GM12878 (cell line): ENCODE measurements at regions of chr13 and their contacts with region 1.

Region 1: GRCh38 chr13:100514788-100515409 is 73.7 kb downstream of the GGACT start:
- DNase-seq: peak; percentile 27
- ATAC-seq: peak; percentile 99
- H3K4me3 ChIP-seq: no peak overlapping the region
- H3K27ac ChIP-seq: no peak overlapping the region
- H3K4me1 ChIP-seq: peaks cover 4% of the 10 kb centered on the region; the same call in 1 of the 2 replicates
- H3K27me3 ChIP-seq: no peaks in the 10 kb centered on the region
- CTCF ChIP-seq: peak; percentile 90 to 97 (median 95)
- EP300 ChIP-seq: no peak
- POLR2A ChIP-seq: no peak
- RAD21 ChIP-seq: peak; percentile 95

Region 2: DNA sequence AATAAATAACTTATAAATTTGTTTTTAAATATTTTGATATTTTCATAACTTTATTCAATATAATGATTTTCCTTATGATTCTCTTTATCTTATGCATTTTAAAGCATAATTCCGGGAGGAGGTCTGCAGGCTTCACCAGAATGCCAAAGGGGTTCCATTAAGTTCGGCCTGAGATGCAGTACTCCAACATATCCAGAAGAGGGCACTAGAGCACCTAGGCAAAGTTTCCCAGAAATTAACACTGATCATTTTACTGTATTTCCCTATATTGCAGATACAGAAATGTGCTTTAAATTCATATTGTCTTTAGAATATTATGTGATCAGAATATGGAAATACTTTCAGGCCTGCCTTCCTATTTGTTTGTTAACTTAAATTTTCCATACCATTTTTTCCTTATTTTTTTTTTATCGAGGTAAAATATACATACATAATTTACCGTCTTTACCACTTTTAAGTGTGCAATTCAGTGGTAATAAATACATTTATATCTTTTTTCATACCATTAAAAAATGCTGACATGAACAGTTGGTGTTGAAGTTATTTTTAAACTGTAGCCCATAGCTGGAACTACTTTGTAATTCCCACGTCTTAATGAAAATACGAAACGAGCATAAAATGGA is 1072.5 kb before region 1 on chr13:
- CTCF ChIA-PET with region 1: no interaction called
- POLR2A ChIA-PET with region 1: no interaction called
- RAD21 ChIA-PET with region 1: no interaction called
- SMC1A ChIA-PET with region 1: interaction called, 3 read pairs
- in situ Hi-C with region 1: no loop called
- intact Hi-C with region 1: loop called (anchors 5 kb)
- DNase-seq: no peak
- ATAC-seq: peak; percentile 77
- H3K4me3 ChIP-seq: no peak overlapping the region
- H3K27ac ChIP-seq: no peak overlapping the region
- H3K4me1 ChIP-seq: 0 out of 2 replicates have a peak, but pooled peaks cover 2% of the 10 kb centered on the region
- H3K27me3 ChIP-seq: peaks cover 2 to 4% of the 10 kb centered on the region in 2 experiments; a peak in 2 of 4 replicates
- CTCF ChIP-seq: peak; percentile 81 to 93 (median 88)
- EP300 ChIP-seq: no peak
- POLR2A ChIP-seq: no peak
- RAD21 ChIP-seq: peak; percentile 96

Region 3: GRCh38 chr13:99898421-99898820 is 616.5 kb before region 1 on chr13:
- CTCF ChIA-PET with region 1: interaction called, 33 read pairs
- POLR2A ChIA-PET with region 1: no interaction called
- RAD21 ChIA-PET with region 1: interaction called, 3 read pairs
- SMC1A ChIA-PET with region 1: interaction called, 8 read pairs
- in situ Hi-C with region 1: no loop called
- intact Hi-C with region 1: loop called (anchors 5 kb)
- DNase-seq: no peak
- ATAC-seq: no peak
- H3K4me3 ChIP-seq: no peak overlapping the region
- H3K27ac ChIP-seq: no peak overlapping the region
- H3K4me1 ChIP-seq: no peaks in the 10 kb centered on the region
- H3K27me3 ChIP-seq: peaks cover 0 to 12% of the 10 kb centered on the region in 2 experiments; a peak in 2 of 4 replicates
- CTCF ChIP-seq: no peak
- EP300 ChIP-seq: no peak
- POLR2A ChIP-seq: no peak
- RAD21 ChIP-seq: no peak

Region 4: DNA sequence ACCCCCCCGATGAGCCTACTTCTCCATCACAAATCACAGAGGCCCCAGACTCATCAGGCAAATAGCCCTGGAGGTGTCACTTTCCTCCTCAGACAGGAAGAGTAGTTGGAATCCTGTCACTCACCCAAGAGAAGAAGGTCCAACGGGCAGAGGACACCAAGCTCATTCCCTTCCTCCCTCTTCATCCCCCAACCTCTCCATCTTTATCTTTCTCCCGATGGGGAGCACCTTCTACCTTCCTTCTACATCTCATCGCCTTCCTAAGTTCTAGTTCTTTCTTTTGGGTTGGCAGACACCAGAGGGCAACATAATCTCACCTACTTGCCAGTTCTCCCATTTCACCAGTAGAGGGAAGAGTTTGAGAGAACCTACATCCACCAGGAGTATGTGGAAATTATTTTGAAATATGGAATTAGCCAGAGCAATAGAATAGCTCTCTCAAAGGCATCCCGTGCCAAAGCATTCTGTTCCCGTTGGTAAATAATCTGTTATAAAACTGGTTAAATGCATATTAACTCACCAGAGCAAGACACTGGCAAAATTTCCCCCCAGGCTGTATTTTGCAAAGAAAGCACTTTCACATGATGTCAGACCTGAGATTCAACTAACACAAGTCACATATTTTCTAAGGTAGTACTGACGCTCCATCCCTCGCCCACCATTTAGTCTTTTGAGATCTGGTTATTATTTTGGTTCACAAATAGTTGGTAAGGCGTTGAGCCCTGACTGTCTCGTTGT is 598.4 kb before region 1 on chr13:
- CTCF ChIA-PET with region 1: interaction called, 60 read pairs
- POLR2A ChIA-PET with region 1: no interaction called
- RAD21 ChIA-PET with region 1: interaction called, 9 read pairs
- SMC1A ChIA-PET with region 1: interaction called, 7 read pairs
- in situ Hi-C with region 1: loop called (anchors 5 kb)
- intact Hi-C with region 1: loop called (anchors 1 kb)
- DNase-seq: peak; percentile 31
- ATAC-seq: peak; percentile 95
- H3K4me3 ChIP-seq: no peak overlapping the region
- H3K27ac ChIP-seq: no peak overlapping the region
- H3K4me1 ChIP-seq: no peaks in the 10 kb centered on the region
- H3K27me3 ChIP-seq: no peaks in the 10 kb centered on the region
- CTCF ChIP-seq: peak; percentile 91 to 99 (median 93)
- EP300 ChIP-seq: no peak
- POLR2A ChIP-seq: no peak
- RAD21 ChIP-seq: peak; percentile 86

Region 5: DNA sequence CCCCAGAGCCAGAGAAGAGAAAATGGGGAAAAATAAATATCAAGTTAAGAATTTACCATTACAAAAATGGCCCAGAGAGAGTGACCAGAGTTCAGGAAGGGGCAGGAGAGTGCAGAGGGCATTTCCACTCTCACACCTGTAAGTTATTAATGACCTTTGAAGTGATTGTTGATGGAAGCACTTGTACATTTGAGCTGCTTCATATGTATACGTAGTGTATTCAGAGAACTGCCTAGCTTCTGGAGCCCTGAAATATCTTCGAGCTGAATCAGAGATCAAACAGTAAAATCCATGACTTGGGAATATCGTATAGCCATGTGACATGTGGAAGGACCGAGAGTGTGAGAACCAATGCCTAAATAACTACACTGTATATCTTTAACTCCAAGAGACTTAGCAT is 475.2 kb before region 1 on chr13:
- CTCF ChIA-PET with region 1: interaction called, 3 read pairs
- POLR2A ChIA-PET with region 1: no interaction called
- RAD21 ChIA-PET with region 1: interaction called, 4 read pairs
- SMC1A ChIA-PET with region 1: no interaction called
- in situ Hi-C with region 1: no loop called
- intact Hi-C with region 1: loop called (anchors 10 kb)
- DNase-seq: no peak
- ATAC-seq: no peak
- H3K4me3 ChIP-seq: no peak overlapping the region
- H3K27ac ChIP-seq: no peak overlapping the region
- H3K4me1 ChIP-seq: no peaks in the 10 kb centered on the region
- H3K27me3 ChIP-seq: no peaks in the 10 kb centered on the region
- CTCF ChIP-seq: no peak
- EP300 ChIP-seq: no peak
- POLR2A ChIP-seq: no peak
- RAD21 ChIP-seq: no peak

Region 6: DNA sequence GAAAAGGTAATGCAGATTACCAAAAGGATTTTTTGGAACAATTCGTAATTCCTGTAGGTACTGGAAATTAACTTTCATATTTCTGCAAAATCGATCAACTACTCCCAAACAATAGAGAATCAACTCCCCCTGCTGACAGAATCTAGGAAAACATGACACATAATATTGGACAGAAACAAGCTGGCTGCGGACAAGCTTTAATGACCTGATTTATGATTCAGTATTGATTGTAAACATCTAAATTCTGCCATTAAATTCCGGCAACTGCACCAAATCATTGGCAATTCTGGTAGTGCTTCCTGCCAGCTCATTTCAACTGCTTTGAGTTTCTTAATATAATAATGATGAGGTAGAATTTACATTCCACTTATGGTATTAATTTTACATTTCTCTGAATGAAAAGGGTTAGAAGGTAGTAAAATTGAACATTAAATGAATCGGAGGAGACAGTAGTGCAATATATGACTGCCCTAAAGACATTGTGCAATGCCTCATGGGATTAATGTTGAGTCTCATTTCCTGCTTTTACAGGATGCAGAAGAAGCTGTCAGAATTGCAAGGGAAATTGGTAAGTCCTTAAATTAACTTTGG is 279.5 kb before region 1 on chr13:
- CTCF ChIA-PET with region 1: interaction called, 10 read pairs
- POLR2A ChIA-PET with region 1: no interaction called
- RAD21 ChIA-PET with region 1: interaction called, 13 read pairs
- SMC1A ChIA-PET with region 1: interaction called, 7 read pairs
- in situ Hi-C with region 1: loop called (anchors 10 kb)
- intact Hi-C with region 1: loop called (anchors 2 kb)
- DNase-seq: no peak
- ATAC-seq: peak; percentile 71
- H3K4me3 ChIP-seq: no peak overlapping the region
- H3K27ac ChIP-seq: no peak overlapping the region
- H3K4me1 ChIP-seq: no peaks in the 10 kb centered on the region; the same call in none of the 2 replicates
- H3K27me3 ChIP-seq: no peaks in the 10 kb centered on the region
- CTCF ChIP-seq: peak; percentile 30 to 53 (median 34); a peak in 4 of 6 replicates
- EP300 ChIP-seq: no peak
- POLR2A ChIP-seq: no peak
- RAD21 ChIP-seq: peak; percentile 83

Region 7: GRCh38 chr13:100365680-100366079 is 149.2 kb before region 1 on chr13:
- CTCF ChIA-PET with region 1: no interaction called
- POLR2A ChIA-PET with region 1: no interaction called
- RAD21 ChIA-PET with region 1: no interaction called
- SMC1A ChIA-PET with region 1: no interaction called
- in situ Hi-C with region 1: no loop called
- intact Hi-C with region 1: loop called (anchors 5 kb)
- DNase-seq: no peak
- ATAC-seq: no peak
- H3K4me3 ChIP-seq: no peak overlapping the region
- H3K27ac ChIP-seq: no peak overlapping the region
- H3K4me1 ChIP-seq: no peaks in the 10 kb centered on the region; the same call in 1 of the 2 replicates
- H3K27me3 ChIP-seq: no peaks in the 10 kb centered on the region
- CTCF ChIP-seq: no peak
- EP300 ChIP-seq: no peak
- POLR2A ChIP-seq: no peak
- RAD21 ChIP-seq: no peak